Activated B cell treated with CpG ODN at 0.5 μM for 24 hours (primary cell): ENCODE measurements at regions of chr10 and their contacts with region 1.

Region 1: DNA sequence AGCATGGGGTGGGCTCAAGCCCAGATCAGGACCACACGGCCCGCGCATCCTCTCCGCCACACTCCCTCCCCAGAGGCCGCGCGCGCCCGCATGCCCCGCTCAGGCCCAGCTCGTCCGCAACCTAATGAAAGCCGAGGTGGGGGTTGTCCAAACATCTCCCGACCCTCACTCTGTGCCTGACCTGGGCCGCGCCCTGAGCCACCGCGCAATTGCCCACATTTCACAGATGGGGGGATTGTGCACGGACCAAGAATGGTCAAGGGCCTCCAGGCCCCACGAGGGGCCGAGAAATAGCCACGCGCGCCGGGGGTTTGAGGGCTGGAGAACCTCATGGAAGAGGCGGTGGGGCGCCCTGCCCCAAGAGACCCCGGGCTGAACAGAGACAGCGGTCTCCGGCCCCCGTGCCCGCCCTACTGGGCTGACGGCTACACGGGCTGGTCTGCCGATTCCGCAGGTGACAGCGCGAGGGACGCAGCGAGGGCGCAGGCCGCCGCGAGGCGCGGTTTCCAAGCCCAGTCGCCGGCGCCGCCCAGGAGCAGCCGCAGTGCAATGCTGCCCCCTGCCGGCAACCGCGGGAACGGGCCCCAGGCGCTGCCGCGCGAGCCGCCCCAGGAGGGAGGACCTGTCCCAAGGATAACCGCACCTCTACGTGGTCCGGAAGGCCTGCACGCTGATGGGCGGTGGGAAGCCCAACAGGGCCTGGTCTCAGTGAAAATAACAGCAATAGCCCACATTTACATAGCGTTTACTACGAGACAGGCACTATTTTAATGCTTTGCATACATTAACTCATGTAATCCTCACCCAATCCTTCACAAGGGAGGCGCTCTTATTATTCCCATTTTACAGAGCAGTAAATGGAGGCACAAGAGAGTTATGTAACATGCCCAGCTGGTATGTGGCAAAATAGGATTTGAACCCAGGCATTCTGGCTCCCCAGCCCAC is 10.5 kb upstream of the GRID1 start:
- DNase-seq: peak; percentile 85
- ATAC-seq: peak; percentile 95
- H3K4me3 Mint-ChIP-seq: no peak overlapping the region
- H3K27ac Mint-ChIP-seq: no peak overlapping the region
- H3K4me1 Mint-ChIP-seq: no peaks in the 10 kb centered on the region
- H3K27me3 Mint-ChIP-seq: peaks cover 49% of the 10 kb centered on the region
- CTCF ChIP-seq: peak; percentile 99

Region 2: DNA sequence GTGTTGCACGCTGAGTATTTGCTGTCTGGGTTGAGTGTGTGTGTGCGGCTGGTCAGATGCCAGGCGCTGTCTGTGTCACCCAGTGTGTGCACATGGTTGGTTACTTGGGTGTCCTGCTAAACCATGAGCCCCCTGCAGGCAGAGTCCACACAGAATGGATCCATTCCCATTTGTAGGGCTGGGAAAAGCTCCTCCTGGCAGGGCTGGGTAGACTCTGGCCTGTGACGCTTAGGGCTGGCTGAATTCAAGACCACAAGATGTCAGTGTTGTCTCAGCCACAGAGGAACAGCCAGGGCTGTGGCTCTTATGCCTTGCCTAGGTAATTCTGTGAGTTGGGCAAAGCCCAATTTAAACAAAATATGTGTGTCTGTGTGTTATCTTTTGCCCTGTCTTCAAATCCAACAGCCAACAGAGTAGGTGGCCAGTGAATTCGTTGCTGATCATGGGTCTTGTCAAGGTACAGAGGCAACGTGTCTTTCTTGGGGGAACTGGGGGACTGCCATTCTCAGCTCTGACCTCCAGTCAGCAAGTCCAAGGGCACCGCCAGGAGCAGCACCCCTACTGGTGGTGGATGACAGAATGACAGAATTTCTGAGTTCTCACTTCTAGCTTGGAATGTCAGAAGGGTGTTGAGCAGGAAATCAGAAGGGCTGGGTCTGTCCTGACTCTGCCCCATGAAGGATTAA is 1763.6 kb before region 1 on chr10:
- CTCF ChIA-PET with region 1: no interaction called
- POLR2A ChIA-PET with region 1: no interaction called
- intact Hi-C with region 1: loop called (anchors 5 kb)
- DNase-seq: no peak
- ATAC-seq: no peak
- H3K4me3 Mint-ChIP-seq: no peak overlapping the region
- H3K27ac Mint-ChIP-seq: no peak overlapping the region
- H3K4me1 Mint-ChIP-seq: no peaks in the 10 kb centered on the region
- H3K27me3 Mint-ChIP-seq: no peaks in the 10 kb centered on the region
- CTCF ChIP-seq: no peak

Region 3: DNA sequence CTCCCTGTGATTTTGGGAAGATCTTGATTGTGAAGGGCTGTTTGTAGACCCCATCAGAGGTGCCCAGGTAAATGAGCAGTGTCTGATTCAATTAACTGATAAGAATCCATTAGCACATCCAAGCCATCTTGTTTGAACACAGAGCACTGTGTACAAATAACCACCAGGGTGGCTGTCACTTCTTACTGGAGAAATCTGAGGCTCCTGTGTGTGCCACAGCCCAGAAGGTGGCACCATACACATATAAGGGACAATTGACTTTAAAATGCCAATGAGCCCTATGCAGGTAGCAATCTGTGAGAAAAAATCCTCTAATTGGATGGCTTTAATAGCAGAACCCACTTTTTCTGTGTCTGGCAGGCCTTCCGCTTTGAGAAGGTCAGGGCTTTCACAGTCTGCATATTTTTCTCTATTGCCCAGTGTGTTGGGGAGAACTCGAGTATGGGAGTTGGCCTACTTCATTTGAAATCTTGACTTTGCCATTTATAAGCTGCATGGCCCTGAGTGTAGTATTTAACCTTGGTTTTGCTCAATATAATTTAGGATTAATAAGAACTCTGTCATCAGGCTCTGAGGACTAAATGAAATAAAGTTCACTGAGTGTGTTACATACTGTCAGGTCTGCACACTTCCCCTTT is 1531.4 kb before region 1 on chr10:
- CTCF ChIA-PET with region 1: no interaction called
- POLR2A ChIA-PET with region 1: no interaction called
- intact Hi-C with region 1: loop called (anchors 2 kb)
- DNase-seq: no peak
- ATAC-seq: no peak
- H3K4me3 Mint-ChIP-seq: no peak overlapping the region
- H3K27ac Mint-ChIP-seq: no peak overlapping the region
- H3K4me1 Mint-ChIP-seq: no peaks in the 10 kb centered on the region
- H3K27me3 Mint-ChIP-seq: no peaks in the 10 kb centered on the region
- CTCF ChIP-seq: no peak

Region 4: DNA sequence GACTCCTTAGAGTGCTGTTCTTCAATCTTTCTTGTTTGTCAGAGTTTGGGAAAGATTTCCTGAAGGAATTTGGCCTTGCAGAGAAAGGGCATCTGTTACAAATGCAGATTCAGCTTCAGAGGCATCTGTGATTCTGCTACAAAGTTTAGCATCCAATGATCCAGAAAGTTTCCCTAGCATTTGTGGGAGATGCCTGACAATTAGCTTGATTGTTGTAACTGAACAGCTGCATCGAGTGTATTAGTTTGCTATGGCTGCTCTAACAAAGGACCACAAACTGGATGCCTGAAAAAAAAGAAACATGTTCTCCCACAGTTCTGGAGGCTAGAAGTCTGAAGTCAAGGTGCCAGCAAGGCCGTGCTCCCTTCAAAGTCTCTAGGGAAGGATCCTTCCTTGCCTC is 375.6 kb before region 1 on chr10:
- CTCF ChIA-PET with region 1: no interaction called
- POLR2A ChIA-PET with region 1: no interaction called
- intact Hi-C with region 1: loop called (anchors 2 kb)
- DNase-seq: no peak
- ATAC-seq: no peak
- H3K4me3 Mint-ChIP-seq: no peak overlapping the region
- H3K27ac Mint-ChIP-seq: no peak overlapping the region
- H3K4me1 Mint-ChIP-seq: no peaks in the 10 kb centered on the region
- H3K27me3 Mint-ChIP-seq: peaks cover 17% of the 10 kb centered on the region
- CTCF ChIP-seq: no peak

Region 5: DNA sequence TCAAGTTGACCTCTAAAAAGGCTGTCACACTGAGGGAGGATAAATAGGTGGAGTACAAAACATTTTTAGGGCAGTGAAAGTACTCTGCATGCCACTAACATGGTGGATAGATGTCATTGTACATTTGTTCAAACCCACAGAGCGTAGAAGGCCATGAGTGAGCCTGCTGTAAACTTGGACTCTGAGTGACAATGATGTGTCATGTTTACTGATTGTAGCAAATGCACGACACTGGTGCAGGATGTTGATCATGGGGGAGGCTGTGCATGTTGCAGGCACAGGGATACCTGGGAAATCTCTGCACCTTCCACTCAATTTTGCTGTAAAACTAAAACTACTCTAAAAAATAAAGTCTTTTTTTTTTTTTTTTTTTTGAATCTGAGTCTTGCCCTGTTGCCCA is 42.0 kb after region 1 on chr10:
- CTCF ChIA-PET with region 1: no interaction called
- POLR2A ChIA-PET with region 1: no interaction called
- intact Hi-C with region 1: no loop called
- DNase-seq: no peak
- ATAC-seq: no peak
- H3K4me3 Mint-ChIP-seq: no peak overlapping the region
- H3K27ac Mint-ChIP-seq: no peak overlapping the region
- H3K4me1 Mint-ChIP-seq: peaks cover 12% of the 10 kb centered on the region
- H3K27me3 Mint-ChIP-seq: no peaks in the 10 kb centered on the region
- CTCF ChIP-seq: no peak